GM18951 (cell line): ENCODE measurements at regions of chr9 and their contacts with region 1.

Region 1: GRCh38 chr9:16133556-16134227 is 580.8 kb downstream of the CCDC171 start:
- POLR2A ChIP-seq: no peak

Region 2: DNA sequence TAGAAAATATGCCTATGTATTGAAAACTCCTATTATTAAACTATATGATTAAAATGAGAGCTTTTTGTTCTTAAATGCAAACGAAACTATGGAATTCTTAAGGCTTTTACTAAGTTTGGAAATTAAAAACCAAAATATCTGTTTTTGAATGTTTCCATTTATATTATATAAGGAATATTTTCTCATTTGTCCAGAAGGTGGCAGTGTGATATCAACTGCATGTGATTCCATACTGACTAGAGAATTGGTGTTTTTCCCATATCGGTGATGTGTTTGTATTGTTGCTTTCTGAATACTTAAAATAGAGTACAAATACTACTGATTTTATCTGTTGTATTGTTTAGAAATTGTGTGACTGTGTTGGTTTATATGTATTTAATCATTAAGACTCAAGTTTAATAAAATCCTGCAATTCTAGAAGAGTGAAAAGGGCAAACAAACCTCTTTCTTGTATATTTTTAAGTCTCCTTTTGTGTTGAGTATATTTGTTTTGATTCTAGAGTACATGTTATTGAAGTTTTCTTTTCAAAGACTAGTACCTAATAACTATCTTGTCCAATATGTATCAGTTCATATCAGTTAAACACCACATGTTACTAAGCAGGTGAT is 260.0 kb before region 1 on chr9:
- in situ Hi-C with region 1: loop called (anchors 25 kb)
- POLR2A ChIP-seq: no peak

Region 3: DNA sequence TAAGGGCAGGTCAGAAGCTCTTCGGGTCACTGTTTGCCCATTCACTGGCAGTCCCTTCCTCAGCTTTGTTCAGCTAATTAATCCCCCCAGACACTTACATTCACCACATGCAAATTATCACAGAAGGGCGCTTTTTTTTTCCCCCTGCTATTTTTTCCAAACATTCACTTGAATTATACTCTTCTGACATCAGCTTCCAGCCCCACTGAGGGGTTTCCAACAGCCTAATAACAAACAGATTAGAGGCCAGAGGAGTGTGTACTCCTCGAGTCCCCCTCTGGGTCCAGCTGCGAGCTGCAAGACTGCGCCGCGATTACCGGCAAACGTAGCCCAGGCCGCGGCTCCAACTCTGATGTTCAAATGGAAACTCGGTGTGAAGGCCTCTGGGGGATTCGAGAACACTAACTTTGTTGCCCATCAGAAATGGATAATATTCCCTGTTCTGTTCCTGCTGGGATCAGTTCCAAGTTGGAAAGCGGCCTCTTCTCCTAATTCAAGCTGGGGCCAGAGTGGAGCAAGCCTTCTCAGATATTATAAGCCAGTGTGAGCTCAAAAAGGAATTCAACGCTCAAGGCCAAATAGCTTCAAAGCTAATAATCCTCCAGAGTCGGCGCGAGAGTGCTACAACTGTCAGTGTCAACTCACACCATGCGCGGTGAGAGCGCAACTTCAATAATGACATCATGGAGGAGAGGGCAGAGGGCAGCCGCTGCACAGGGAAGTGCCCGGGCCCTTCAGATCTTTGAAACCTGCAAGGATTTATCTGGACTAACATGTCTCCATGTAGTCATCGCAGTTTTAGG is 176.0 kb after region 1 on chr9:
- in situ Hi-C with region 1: no loop called
- POLR2A ChIP-seq: no peak